Activated naive CD4-positive, alpha-beta T cell treated with anti-CD3 and anti-CD28 coated beads for 36 hours (primary cell): ENCODE measurements at regions of chr4 and their contacts with region 1.

Region 1: GRCh38 chr4:160956875-160957274 is 1206.9 kb downstream of the FSTL5 start:
- DNase-seq: no peak
- H3K4me3 Mint-ChIP-seq: no peak overlapping the region
- H3K27ac Mint-ChIP-seq: no peak overlapping the region
- H3K4me1 Mint-ChIP-seq: no peaks in the 10 kb centered on the region
- H3K27me3 Mint-ChIP-seq: no peaks in the 10 kb centered on the region

Region 2: DNA sequence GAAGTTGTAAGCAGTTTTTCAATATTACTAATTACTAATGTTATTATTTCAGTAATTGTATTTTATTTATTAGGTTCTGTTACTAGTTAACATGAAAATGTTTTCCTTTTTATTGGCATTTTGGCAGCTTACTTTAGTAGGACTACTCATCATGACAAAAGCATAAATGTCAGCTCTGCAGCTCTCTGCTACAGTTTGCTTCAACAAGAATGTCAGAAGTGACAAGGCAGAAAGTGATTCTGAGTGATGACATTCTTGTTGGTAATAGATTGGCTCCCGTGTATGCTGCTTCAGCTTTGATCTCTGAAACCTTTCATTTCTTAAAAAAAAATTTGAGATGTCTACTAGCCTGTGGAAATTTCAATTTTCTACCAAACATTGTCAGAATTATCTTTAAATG is 13.1 kb after region 1 on chr4:
- CTCF ChIA-PET with region 1: no interaction called
- intact Hi-C with region 1: loop called (anchors 1 kb)
- DNase-seq: no peak
- H3K4me3 Mint-ChIP-seq: no peak overlapping the region
- H3K27ac Mint-ChIP-seq: no peak overlapping the region
- H3K4me1 Mint-ChIP-seq: no peaks in the 10 kb centered on the region
- H3K27me3 Mint-ChIP-seq: no peaks in the 10 kb centered on the region

Region 3: DNA sequence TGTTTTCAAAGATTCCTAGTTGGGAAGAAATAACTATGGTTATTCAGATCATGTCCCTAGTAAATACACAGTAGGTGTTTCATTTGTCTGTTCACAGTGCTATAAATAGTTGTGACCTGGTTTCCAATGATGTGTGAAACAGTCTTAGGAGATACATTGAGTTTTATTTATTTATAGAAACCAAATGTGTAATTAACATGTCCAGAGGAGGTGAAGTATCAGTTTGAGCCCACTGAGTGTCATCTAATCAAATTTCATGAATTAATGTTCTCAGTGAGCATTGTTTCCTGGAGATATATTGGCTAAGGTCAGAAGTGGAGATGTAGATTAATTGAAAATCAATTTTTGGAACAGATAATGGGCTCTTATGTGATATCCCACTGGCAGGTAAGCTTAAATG is 210.7 kb after region 1 on chr4:
- CTCF ChIA-PET with region 1: no interaction called
- intact Hi-C with region 1: no loop called
- DNase-seq: no peak
- H3K4me3 Mint-ChIP-seq: no peak overlapping the region
- H3K27ac Mint-ChIP-seq: no peak overlapping the region
- H3K4me1 Mint-ChIP-seq: no peaks in the 10 kb centered on the region
- H3K27me3 Mint-ChIP-seq: no peaks in the 10 kb centered on the region